ENCODE measurements at regions of chr12 and their contacts with region 1.

Region 1: DNA sequence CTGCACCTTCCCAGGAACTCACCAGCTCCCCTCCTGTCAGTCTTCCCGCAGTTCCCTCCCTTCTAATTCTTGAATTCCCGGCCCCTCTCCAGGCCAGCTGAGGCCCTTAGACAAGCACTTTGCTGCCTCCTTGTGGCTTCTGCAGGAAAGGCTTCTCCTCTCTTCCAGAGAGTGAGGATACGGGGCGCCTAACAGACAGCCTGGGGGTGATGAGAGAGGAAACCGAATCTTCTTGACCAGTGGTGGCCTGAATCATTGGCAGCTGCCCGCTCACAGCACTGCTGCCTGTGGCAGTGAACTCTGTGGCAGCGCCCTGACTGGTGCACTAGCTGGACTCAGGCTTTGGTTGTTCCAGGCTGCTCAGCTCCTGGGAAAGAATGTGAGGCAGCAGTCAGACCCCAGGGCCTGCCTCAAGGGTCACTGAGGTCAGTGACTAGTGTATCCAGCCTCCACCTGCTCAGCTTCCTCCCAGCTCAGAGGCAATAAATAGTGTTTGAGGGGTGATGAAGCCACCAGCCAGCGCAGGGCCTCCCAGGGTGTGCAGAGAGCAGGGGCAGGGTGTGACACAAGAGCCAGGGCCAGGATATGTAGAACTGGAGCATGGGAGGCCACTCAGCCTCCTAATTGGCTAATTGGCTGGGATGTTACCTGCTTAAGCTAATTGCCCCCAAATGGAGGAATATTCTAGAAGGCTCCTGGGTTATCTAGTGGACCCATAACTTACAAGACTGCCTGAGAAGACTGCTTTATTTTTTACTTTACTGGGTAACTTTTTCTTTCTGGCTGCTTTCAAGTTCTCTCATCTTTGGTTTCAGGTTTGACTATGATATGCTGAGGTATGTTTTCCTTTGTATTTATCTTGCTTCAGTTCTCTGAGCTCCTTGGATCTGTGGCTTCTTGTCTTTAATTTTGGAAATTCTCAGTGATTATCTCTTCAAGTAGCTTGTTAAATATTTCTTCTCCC is 12.9 kb upstream of the MCRS1 start:
- DNase-seq: no peak
- H3K4me3 ChIP-seq: no peak overlapping the region
- H3K27ac ChIP-seq: peak overlapping the region; percentile 4 to 55 (median 30)
- H3K4me1 ChIP-seq: peaks cover 21 to 43% (median 30%) of the 10 kb centered on the region in 4 donors
- H3K27me3 ChIP-seq: no peaks in the 10 kb centered on the region
- CTCF ChIP-seq: peak; percentile 63 to 89 (median 84)
- EP300 ChIP-seq: no peak
- POLR2A ChIP-seq: no peak

Region 2: GRCh38 chr12:49358483-49359141 is 222.2 kb before region 1 on chr12:
- intact Hi-C with region 1: loop called (anchors 2 kb)
- DNase-seq: peak; percentile 37
- H3K4me3 ChIP-seq: no peak overlapping the region
- H3K27ac ChIP-seq: no peak overlapping the region
- H3K4me1 ChIP-seq: peaks cover 0 to 7% (median 4%) of the 10 kb centered on the region in 4 donors
- H3K27me3 ChIP-seq: peaks cover 0 to 31% (median 2%) of the 10 kb centered on the region in 4 donors
- CTCF ChIP-seq: peak; percentile 71 to 83 (median 82)
- EP300 ChIP-seq: no peak
- POLR2A ChIP-seq: no peak

Region 3: DNA sequence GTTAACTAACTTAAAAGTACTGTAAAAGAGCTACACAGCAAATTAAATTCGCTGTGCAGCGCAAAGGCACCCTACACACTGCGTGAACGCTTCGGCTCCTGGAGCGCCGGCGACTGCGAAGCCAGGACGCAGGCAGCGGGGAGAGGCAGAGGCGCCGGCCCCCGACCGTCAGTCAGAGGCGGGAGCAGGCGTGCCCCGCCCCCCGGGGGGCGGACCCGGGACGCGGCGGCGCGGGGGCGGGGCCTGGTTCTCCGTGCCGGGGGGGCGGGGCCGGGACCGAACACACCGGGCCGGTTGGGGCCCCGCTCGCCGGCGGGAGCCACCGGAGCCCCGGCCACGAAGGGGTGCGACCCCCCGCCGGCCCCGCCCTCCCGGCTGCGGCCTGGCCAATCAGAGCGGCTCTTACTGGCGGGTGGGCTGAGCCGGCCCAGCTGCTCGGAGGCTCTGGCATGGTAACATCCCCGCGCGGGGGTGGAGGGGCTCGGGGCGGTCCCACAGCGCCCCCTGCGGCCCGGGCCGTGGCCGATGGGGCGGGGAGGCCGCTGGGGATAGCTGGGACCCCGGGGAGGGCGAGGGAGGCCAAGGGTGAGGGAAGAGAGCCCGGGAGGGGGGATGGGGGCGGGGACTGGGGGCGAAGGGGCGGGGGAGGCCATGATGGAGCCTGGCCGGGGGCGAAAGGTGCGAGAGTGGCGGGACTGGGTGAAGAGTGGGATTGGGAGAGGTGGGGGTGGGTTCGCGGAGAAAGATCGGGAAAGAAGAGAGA is 42.5 kb after region 1 on chr12 and contains the start of gene PRPF40B:
- intact Hi-C with region 1: loop called (anchors 5 kb)
- DNase-seq: no peak
- H3K4me3 ChIP-seq: peak within 1 kb of the TSS; percentile 62 to 77 (median 64)
- H3K27ac ChIP-seq: peak within 1 kb of the TSS; percentile 86 to 92 (median 88)
- H3K4me1 ChIP-seq: peaks cover 14 to 50% (median 38%) of the 10 kb centered on the region in 4 donors
- H3K27me3 ChIP-seq: no peaks in the 10 kb centered on the region
- CTCF ChIP-seq: peak; percentile 47 to 62 (median 57)
- EP300 ChIP-seq: no peak
- POLR2A ChIP-seq: peak; percentile 49
- total RNA-seq, gene PRPF40B: 9.6 to 19.0 (median 13.9) TPM

Measured in esophagus muscularis mucosa (tissue), 4 donors.